ENCODE measurements at regions of chr7 and their contacts with region 1.

Region 1: GRCh38 chr7:76314042-76314721 is 11.7 kb downstream of the HSPB1 start:
- DNase-seq: peak; percentile 99
- H3K4me3 Mint-ChIP-seq: no peak overlapping the region
- H3K27ac Mint-ChIP-seq: no peak overlapping the region
- H3K4me1 Mint-ChIP-seq: peaks cover 18% of the 10 kb centered on the region
- H3K27me3 Mint-ChIP-seq: no peaks in the 10 kb centered on the region

Region 2: DNA sequence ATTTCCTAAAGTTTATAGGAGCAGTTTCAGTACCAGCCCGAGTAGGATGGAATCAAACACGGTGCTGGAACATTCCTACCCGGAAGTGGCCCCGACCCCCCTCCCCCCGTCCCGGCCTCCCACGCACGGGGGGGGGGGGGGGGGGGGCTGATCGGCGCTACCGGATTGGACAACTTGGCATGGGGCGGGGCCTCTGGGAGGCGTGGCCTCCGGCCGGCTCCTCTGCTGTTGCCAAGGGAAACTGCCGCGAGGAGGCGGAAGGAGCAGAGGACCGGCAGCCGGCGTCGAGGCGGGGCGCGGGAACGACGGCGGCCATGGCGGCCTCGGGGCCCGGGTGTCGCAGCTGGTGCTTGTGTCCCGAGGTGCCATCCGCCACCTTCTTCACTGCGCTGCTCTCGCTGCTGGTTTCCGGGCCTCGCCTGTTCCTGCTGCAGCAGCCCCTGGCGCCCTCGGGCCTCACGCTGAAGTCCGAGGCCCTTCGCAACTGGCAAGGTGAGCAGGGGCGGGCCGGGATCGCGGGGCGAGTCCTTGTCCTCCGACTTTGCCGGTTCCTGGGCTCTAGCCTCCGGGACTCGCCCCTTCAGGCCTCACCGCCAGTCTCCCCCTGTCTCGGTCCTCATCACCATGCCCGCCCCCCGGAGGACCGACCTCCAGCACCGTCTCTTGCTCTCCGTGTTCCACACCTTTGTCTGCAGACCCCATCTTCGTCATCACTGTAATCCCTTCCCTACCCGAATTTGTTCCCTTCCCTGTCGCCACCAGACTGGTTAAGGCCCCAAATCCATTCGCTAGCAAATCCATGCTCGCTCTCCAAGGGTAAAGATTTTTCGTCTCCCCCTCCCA is 435.2 kb before region 1 on chr7 and contains the start of gene RHBDD2:
- CTCF ChIA-PET with region 1: no interaction called
- intact Hi-C with region 1: loop called (anchors 2 kb)
- DNase-seq: peak; percentile 97
- H3K4me3 Mint-ChIP-seq: peak within 1 kb of the TSS; percentile 93
- H3K27ac Mint-ChIP-seq: peak within 1 kb of the TSS; percentile 91
- H3K4me1 Mint-ChIP-seq: peaks cover 31% of the 10 kb centered on the region
- H3K27me3 Mint-ChIP-seq: no peaks in the 10 kb centered on the region
- total RNA-seq, gene RHBDD2: 21.5 to 24.0 TPM

Region 3: GRCh38 chr7:76166404-76167255 is 147.6 kb before region 1 on chr7:
- CTCF ChIA-PET with region 1: interaction called, 6 read pairs
- intact Hi-C with region 1: loop called (anchors 2 kb)
- DNase-seq: peak; percentile 94
- H3K4me3 Mint-ChIP-seq: peak overlapping the region; percentile 84
- H3K27ac Mint-ChIP-seq: peak overlapping the region; percentile 85
- H3K4me1 Mint-ChIP-seq: peaks cover 8% of the 10 kb centered on the region
- H3K27me3 Mint-ChIP-seq: no peaks in the 10 kb centered on the region

Region 4: DNA sequence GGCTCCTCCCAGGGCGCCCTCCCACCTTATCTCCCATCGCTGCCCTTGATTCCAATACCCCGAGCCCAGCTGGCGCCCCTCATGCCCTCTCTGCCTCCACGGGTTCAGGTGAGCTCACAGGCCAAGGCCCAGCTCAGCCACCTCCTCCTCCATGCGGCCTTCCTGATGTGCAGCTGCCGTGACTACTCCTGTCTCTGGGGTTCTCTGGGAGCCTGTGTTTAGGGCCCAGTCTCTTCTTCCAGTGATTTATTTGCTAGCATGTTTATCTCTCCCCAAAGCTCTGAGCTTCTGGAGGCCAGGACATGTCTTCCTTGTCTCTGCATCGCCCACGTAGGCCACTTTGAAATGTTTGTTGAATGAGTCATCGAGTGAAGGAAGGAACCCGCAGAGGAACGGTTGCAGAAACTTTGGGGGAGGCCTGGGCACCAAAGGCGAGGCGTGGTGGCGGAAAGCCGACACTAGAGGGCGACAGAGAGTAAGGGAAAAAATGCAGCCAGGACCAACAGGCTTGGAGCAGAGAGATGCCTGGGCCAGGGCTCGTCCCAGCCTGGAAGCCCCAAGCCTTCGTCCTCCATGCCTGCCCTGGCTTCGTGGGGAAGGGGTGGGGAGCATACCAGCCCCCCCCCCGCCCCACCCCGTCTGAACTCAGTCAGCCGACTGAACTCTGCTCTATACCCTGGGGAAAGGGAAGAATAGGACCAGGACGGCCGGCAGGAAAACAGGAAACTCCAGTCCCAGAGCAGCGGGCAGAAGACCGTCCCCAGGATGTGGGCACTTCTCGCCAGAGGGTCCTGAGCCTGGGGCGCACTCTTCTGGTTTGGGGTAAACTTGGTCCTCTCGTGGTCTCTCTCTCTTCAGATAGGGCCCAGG is 22.6 kb before region 1 on chr7:
- CTCF ChIA-PET with region 1: interaction called, 96 read pairs
- intact Hi-C with region 1: loop called (anchors 1 kb)
- DNase-seq: peak; percentile 97
- H3K4me3 Mint-ChIP-seq: peak overlapping the region; percentile 38
- H3K27ac Mint-ChIP-seq: peak overlapping the region; percentile 68
- H3K4me1 Mint-ChIP-seq: peaks cover 9% of the 10 kb centered on the region
- H3K27me3 Mint-ChIP-seq: no peaks in the 10 kb centered on the region

Region 5: DNA sequence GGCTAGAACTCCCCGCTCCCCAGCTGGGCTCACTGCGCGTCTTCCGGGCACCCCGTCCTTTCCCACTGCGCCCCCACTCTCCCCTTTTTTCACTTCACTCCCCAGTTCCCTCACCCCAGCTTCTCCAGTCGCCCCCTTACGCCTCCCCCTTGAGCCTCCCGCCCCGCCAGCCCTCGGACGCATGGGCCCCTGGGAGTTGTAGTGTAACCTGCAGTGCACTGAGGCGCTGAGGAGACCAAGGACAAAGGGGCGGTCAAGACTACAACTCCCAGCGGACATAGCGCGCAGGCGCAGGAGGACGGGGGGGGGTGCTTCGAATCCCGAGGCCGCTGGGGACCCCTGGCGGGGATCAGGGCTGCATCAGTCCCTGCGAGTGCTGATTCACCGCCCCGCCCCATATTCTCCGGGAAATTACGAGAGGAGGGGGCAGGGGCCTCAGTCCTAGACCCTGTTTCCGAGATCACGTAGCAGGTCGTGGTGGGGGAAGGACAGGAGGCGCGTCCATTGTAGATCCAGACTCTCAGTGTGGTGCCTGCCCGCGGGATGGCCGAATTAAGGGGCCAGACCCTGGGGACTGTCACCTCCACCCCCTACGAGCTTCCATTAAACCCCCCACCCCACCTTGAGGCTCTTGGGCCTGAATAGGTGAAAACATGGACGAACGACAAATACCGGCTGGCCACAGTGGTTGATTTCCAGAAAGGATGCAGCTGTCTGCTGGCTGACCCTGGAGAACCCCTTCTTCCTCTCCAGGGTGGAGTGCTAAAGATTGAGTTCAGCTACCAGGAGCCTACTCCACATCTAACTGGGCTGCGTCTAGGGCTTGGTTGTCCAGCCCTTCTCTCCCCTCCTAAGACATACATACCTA is 45.2 kb after region 1 on chr7:
- CTCF ChIA-PET with region 1: interaction called, 15 read pairs
- intact Hi-C with region 1: loop called (anchors 1 kb)
- DNase-seq: peak; percentile 99
- H3K4me3 Mint-ChIP-seq: peak overlapping the region; percentile 91
- H3K27ac Mint-ChIP-seq: peak overlapping the region; percentile 94
- H3K4me1 Mint-ChIP-seq: peaks cover 42% of the 10 kb centered on the region
- H3K27me3 Mint-ChIP-seq: no peaks in the 10 kb centered on the region

Measured in activated naive CD4-positive, alpha-beta T cell treated with anti-CD3 and anti-CD28 coated beads for 36 hours (primary cell).